ENCODE measurements at regions of chr5 and their contacts with region 1.

Region 1: DNA sequence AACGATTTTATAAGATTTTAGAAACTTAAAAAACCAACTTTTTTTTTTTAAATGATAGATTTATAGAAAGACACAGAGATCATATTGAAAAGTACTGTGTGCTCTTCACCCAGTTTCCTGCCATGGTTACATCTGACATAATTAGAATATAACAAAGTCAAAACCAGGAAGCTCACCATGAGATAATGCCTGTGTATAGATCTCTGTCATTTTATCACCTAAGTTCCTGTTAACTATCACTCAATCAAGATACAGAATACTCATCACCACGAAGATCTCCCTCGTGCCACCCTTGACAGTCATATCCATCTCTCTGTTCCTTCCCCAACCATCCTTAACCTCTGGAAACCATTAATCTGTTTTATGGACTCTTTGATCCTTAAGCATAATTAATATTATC is 39.1 kb downstream of the POC5 start:
- DNase-seq: no peak
- ATAC-seq: peak; percentile 68
- H3K4me3 ChIP-seq: no peak overlapping the region
- H3K4me1 ChIP-seq: no peaks in the 10 kb centered on the region
- CTCF ChIP-seq: no peak

Region 2: GRCh38 chr5:75584641-75585040 is 93.5 kb before region 1 on chr5:
- intact Hi-C with region 1: loop called in 1 of 2 experiments (anchors 5 kb)
- DNase-seq: no peak
- ATAC-seq: peak; percentile 44
- H3K4me3 ChIP-seq: no peak overlapping the region
- H3K4me1 ChIP-seq: no peaks in the 10 kb centered on the region
- CTCF ChIP-seq: no peak

Region 3: GRCh38 chr5:75611311-75612225 is 66.6 kb before region 1 on chr5 and contains the start of gene ANKDD1B:
- intact Hi-C with region 1: no loop called
- DNase-seq: peak; percentile 46 to 66 (median 64)
- ATAC-seq: peak; percentile 80
- H3K4me3 ChIP-seq: peak within 1 kb of the TSS; percentile 25
- H3K4me1 ChIP-seq: peaks cover 13% of the 10 kb centered on the region
- CTCF ChIP-seq: no peak
- total RNA-seq, gene ANKDD1B: 4.0 to 9.2 (median 8.0) TPM

Region 4: GRCh38 chr5:76180814-76181805 is 503.0 kb after region 1 on chr5:
- intact Hi-C with region 1: no loop called
- DNase-seq: peak in 1 of 3 donors; percentile 37
- ATAC-seq: peak; percentile 99
- H3K4me3 ChIP-seq: no peak overlapping the region
- H3K4me1 ChIP-seq: no peaks in the 10 kb centered on the region
- CTCF ChIP-seq: no peak

Measured in mucosa of descending colon (tissue), 3 donors.